ENCODE measurements at regions of chr5 and their contacts with region 1.

Region 1: DNA sequence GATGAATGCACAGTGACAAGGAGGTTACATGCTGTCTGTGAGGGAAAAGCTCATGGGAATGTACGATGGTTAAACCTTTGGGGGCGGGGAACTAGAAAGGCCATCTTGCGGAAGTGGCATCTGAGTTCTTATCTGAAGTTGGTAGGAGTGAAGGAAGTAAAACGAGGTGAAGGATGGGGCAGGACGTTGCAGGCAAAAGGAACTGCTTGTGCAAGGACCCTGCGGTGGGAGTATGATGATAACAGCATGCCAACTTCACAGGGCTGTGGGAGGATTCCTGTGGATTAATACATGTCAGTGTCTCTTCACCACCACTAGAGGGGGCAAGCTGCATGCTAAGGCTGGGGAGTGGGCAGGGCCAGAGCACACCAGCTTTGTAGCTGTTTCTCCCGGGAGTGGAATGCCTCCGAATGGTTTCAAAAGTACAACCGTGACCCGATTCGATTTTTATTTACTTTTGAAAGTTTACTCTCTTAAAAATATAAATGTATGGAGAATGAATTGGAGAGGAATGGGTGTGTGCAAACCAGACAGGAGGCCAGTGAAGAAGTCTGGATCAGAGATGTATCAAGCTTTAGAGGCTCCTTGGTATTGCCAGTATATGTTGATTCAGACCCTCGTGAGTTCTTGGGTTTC is 62.5 kb downstream of the CYFIP2 start:
- DNase-seq: peak; percentile 59 to 79 (median 73)
- H3K4me3 ChIP-seq: peak overlapping the region in 1 of 4 donors; percentile 24
- H3K27ac ChIP-seq: no peak overlapping the region
- H3K4me1 ChIP-seq: no peaks in the 10 kb centered on the region
- H3K27me3 ChIP-seq: no peaks in the 10 kb centered on the region
- CTCF ChIP-seq: peak; percentile 80 to 92 (median 90)
- POLR2A ChIP-seq: no peak

Region 2: GRCh38 chr5:157743163-157744050 is 415.0 kb after region 1 on chr5 and contains the start of gene LSM11:
- intact Hi-C with region 1: loop called in 1 of 2 experiments (anchors 5 kb)
- DNase-seq: peak; percentile 83 to 94 (median 88)
- H3K4me3 ChIP-seq: peak within 1 kb of the TSS in 2 of 4 donors; percentile 52 to 79
- H3K27ac ChIP-seq: no peak within 1 kb of the TSS
- H3K4me1 ChIP-seq: peaks cover 0 to 22% of the 10 kb centered on the region in 2 donors
- H3K27me3 ChIP-seq: no peaks in the 10 kb centered on the region
- CTCF ChIP-seq: peak; percentile 76 to 100 (median 96)
- POLR2A ChIP-seq: peak in 1 of 2 donors; percentile 30
- total RNA-seq, gene LSM11: 2.2 to 28.2 (median 4.9) TPM

Measured in adrenal gland (tissue), 19 donors.